ENCODE measurements at regions of chr4 and their contacts with region 1.

Region 1: GRCh38 chr4:40056716-40057585 is at the start of gene N4BP2:
- DNase-seq: peak; percentile 85 to 90 (median 88)
- ATAC-seq: peak; percentile 85
- H3K4me3 ChIP-seq: peak within 1 kb of the TSS; percentile 63
- H3K27ac ChIP-seq: peak within 1 kb of the TSS; percentile 98
- H3K4me1 ChIP-seq: peaks cover 12 to 28% of the 10 kb centered on the region in 2 experiments
- H3K27me3 ChIP-seq: no peaks in the 10 kb centered on the region
- CTCF ChIP-seq: peak; percentile 58 to 98 (median 96)
- EP300 ChIP-seq: no peak
- POLR2A ChIP-seq: peak; percentile 74
- RAD21 ChIP-seq: peak; percentile 79 to 83
- polyA plus RNA-seq, gene N4BP2: 2.7 to 3.3 TPM

Region 2: DNA sequence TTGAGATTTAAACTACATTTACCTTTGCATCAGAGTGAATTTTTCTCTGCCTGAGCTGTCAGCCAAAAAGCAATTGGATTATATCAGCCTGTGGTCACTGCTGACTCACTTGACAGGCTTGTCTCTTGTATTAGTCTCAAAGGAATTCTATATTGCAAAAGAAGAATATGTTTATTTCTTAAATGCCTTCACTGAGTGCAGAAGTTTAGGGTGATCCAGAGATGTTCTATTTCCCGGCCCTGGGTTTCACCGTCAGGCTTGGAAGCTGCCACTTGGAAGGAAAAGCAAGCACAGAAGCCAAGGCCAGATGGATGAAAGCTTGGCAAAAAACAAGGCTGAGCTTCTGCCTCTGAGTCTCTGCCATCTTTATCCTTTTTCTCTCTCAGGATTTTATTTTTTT is 1108.4 kb before region 1 on chr4:
- CTCF ChIA-PET with region 1: no interaction called
- POLR2A ChIA-PET with region 1: no interaction called
- in situ Hi-C with region 1: no loop called
- intact Hi-C with region 1: no loop called
- DNase-seq: no peak
- ATAC-seq: no peak
- H3K4me3 ChIP-seq: no peak overlapping the region
- H3K27ac ChIP-seq: no peak overlapping the region
- H3K4me1 ChIP-seq: no peaks in the 10 kb centered on the region
- H3K27me3 ChIP-seq: peaks cover 9 to 15% of the 10 kb centered on the region in 2 experiments; a peak in 3 of 5 replicates
- CTCF ChIP-seq: no peak
- EP300 ChIP-seq: no peak
- POLR2A ChIP-seq: no peak
- RAD21 ChIP-seq: no peak

Region 3: GRCh38 chr4:39977489-39978377 is 79.2 kb before region 1 on chr4 and contains the start of gene PDS5A:
- CTCF ChIA-PET with region 1: interaction called, 3 read pairs
- POLR2A ChIA-PET with region 1: interaction called, 7 read pairs
- in situ Hi-C with region 1: no loop called
- intact Hi-C with region 1: loop called (anchors 1 kb)
- DNase-seq: peak; percentile 93 to 96 (median 94)
- ATAC-seq: peak; percentile 89
- H3K4me3 ChIP-seq: peak within 1 kb of the TSS; percentile 92
- H3K27ac ChIP-seq: peak within 1 kb of the TSS; percentile 83
- H3K4me1 ChIP-seq: peaks cover 10 to 16% of the 10 kb centered on the region in 2 experiments; a peak in 4 of 5 replicates
- H3K27me3 ChIP-seq: no peaks in the 10 kb centered on the region
- CTCF ChIP-seq: peak; percentile 89 to 99 (median 98)
- EP300 ChIP-seq: 0 out of 2 replicates have a peak, but pooled peaks have one; percentile 17
- POLR2A ChIP-seq: peak; percentile 68
- RAD21 ChIP-seq: peak; percentile 60 to 65
- polyA plus RNA-seq, gene PDS5A: 16.4 to 20.6 TPM

Region 4: GRCh38 chr4:40099010-40099409 is 42.1 kb after region 1 on chr4:
- CTCF ChIA-PET with region 1: no interaction called
- POLR2A ChIA-PET with region 1: no interaction called
- in situ Hi-C with region 1: no loop called
- intact Hi-C with region 1: no loop called
- DNase-seq: no peak
- ATAC-seq: no peak
- H3K4me3 ChIP-seq: no peak overlapping the region
- H3K27ac ChIP-seq: no peak overlapping the region
- H3K4me1 ChIP-seq: no peaks in the 10 kb centered on the region
- H3K27me3 ChIP-seq: no peaks in the 10 kb centered on the region
- CTCF ChIP-seq: no peak
- EP300 ChIP-seq: no peak
- POLR2A ChIP-seq: no peak
- RAD21 ChIP-seq: no peak

Region 5: DNA sequence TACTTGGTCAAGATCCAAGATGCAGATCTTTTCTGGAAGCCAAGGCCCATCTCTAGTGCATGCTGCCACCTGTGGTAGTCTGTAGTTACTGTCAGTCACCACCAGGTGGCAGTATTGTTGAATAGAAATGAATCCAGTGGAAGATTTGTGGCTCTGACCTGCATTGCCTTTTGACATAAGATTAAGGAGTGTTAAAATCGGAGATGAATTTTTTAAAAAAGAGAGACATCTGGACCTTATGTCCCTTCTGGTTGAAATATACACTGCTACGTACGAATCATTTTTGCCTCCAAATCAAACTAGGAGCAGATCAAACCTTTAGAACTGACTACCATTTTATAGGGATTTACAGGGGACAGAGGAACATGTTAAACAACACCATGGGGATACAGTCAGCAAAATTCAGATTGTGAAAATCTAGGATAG is 93.0 kb after region 1 on chr4:
- CTCF ChIA-PET with region 1: no interaction called
- POLR2A ChIA-PET with region 1: interaction called, 3 read pairs
- in situ Hi-C with region 1: no loop called
- intact Hi-C with region 1: loop called (anchors 5 kb)
- DNase-seq: peak; percentile 61 to 88 (median 66)
- ATAC-seq: peak; percentile 96
- H3K4me3 ChIP-seq: no peak overlapping the region
- H3K27ac ChIP-seq: no peak overlapping the region
- H3K4me1 ChIP-seq: no peaks in the 10 kb centered on the region
- H3K27me3 ChIP-seq: no peaks in the 10 kb centered on the region
- CTCF ChIP-seq: peak; percentile 78 to 91 (median 86)
- EP300 ChIP-seq: no peak
- POLR2A ChIP-seq: no peak
- RAD21 ChIP-seq: peak; percentile 94 to 97

Region 6: DNA sequence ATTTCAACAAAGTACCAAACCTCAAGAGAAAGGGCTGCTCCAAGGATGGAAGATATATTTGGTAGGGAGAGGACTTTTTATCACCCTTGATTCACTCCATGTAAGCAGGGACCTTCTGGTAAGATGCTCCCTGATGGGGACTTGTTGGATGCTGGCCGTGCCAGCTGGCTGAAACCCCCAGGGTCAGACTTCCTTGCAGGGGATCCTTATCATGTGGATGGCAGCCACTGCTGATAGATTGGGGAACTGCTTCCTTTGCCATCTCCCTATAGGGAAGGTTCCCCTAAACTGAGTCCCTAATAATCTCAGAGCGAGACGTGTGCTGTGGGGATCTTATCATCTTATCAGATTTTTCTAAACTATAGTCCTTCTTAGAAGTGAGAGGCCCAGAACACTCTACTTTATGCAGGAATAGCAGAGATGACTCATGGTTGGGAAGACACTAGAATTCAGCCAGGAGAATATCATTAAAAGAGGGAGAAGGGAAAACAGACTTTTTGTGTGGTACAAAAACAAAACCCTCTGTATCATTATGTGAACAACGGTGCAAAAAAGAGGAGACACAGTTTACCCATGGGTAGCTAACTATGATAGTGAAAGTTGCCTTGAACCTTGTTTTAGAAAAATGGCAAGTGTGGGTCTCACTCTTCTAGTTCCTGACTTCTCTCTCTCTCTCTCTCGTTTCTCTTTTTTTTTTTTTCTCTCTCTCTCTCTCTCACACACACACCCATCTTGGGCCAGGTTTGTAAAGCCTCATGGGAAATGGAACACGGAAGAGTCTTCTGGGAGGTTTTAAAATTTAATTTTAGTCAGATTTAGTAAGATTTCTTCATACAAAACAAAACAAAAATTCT is 155.9 kb after region 1 on chr4:
- CTCF ChIA-PET with region 1: no interaction called
- POLR2A ChIA-PET with region 1: no interaction called
- in situ Hi-C with region 1: no loop called
- intact Hi-C with region 1: no loop called
- DNase-seq: no peak
- ATAC-seq: no peak
- H3K4me3 ChIP-seq: no peak overlapping the region
- H3K27ac ChIP-seq: peak overlapping the region; percentile 14; the same call in 1 of the 3 replicates
- H3K4me1 ChIP-seq: peaks cover 15 to 28% of the 10 kb centered on the region in 2 experiments; a peak in 4 of 5 replicates
- H3K27me3 ChIP-seq: no peaks in the 10 kb centered on the region
- CTCF ChIP-seq: no peak
- EP300 ChIP-seq: no peak
- POLR2A ChIP-seq: no peak
- RAD21 ChIP-seq: no peak

Region 7: DNA sequence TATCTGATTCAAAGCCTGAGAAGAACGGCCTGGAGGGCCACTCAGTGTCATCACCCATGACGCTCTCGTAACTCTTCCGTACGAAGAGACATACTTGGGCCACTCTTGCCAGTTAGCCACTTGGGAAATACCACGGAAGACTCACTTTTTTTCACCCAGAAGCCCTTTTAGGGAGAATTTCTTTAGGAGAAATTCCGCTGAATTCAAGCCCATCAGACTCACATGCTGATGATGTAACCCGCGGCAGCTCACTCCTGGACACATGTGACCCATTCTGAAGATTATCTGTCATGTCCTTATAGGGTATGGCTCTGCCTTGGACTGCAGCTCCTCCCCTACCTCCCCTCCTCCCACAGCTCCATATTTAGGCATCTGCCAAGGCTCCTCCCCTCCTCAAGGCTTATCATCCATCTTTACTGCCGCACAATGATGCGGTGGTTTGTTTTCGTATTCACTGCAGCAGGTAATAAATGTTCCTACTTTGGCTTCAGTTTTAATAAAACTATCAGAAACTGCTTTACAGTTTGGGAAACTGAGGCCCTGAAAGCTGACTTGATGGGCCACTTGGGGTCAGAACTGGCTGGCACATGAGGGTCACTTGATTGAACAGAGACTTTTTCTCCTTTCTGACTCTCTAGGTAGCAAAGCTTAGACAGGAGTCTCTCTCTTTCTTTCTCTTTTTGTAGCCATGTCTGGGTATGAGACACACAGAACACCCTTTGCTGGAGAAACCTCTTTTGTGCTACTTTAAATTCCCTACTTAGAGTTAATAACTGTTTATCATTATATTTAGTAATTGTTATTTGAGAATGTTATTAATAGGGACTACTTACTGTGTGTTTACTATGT is 182.0 kb after region 1 on chr4:
- CTCF ChIA-PET with region 1: no interaction called
- POLR2A ChIA-PET with region 1: no interaction called
- in situ Hi-C with region 1: no loop called
- intact Hi-C with region 1: loop called (anchors 10 kb)
- DNase-seq: peak; percentile 92 to 97 (median 95)
- ATAC-seq: peak; percentile 99
- H3K4me3 ChIP-seq: peak overlapping the region; percentile 37
- H3K27ac ChIP-seq: peak overlapping the region; percentile 99
- H3K4me1 ChIP-seq: peaks cover 27 to 48% of the 10 kb centered on the region in 2 experiments
- H3K27me3 ChIP-seq: no peaks in the 10 kb centered on the region
- CTCF ChIP-seq: no peak
- EP300 ChIP-seq: peak; percentile 86
- POLR2A ChIP-seq: peak; percentile 79
- RAD21 ChIP-seq: no peak; a peak in 1 of 4 replicates

Region 8: DNA sequence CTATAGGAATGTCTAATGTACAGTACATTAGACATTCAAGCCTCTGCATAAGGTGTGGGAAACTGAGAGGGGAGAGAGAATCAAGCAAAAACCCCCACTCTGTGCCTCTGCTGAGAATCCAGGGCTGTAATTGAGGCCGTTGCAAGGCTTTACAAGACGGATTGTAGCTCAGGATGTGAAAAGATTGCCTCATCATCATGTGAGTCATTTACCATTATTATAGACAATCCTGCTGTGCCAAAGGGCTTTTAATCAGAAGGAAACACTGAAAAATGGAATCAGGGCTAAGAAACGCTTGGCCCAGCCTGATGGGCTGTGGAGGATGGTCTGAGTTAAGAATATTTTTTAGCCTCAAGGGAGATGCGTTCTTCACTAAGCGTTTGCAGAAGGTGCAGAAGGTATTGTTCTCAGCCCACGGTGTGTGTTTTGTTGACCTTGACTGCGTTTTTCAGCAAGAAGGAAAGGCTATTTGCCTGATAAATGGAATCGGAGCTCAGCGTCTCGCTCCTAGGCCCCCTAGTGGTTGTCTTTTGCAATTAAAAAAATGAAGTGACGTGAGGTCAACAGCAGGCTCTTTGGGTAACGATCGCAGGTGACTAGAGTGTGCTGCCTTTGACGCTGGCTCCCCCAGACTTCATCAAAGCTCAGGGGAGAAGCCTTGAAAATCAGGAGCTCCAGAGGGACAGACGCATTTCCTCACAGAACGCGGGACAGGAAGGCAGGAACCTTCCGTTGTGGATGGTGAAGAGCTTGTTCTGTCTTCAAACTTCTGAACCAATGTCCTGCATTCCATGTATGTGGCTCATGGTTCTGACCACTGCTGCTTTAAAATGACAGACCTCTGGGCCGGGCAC is 260.1 kb after region 1 on chr4:
- CTCF ChIA-PET with region 1: interaction called, 9 read pairs
- POLR2A ChIA-PET with region 1: interaction called, 11 read pairs
- in situ Hi-C with region 1: loop called (anchors 5 kb)
- intact Hi-C with region 1: no loop called
- DNase-seq: peak; percentile 63 to 87 (median 68)
- ATAC-seq: peak; percentile 85
- H3K4me3 ChIP-seq: no peak overlapping the region
- H3K27ac ChIP-seq: peak overlapping the region; percentile 61
- H3K4me1 ChIP-seq: peaks cover 12 to 37% of the 10 kb centered on the region in 2 experiments
- H3K27me3 ChIP-seq: no peaks in the 10 kb centered on the region
- CTCF ChIP-seq: peak; percentile 74 to 90 (median 80)
- EP300 ChIP-seq: peak; percentile 22; the same call in 1 of the 2 replicates
- POLR2A ChIP-seq: no peak
- RAD21 ChIP-seq: peak; percentile 51 to 65

Measured in K562 (cell line).